Caco-2 (cell line): ENCODE measurements at regions of chr2 and their contacts with region 1.

Region 1: GRCh38 chr2:157302492-157303099 is 23.0 kb downstream of the ERMN start:
- DNase-seq: peak in 1 of 2 experiments; percentile 72
- H3K4me3 ChIP-seq: no peak overlapping the region
- H3K4me3 Mint-ChIP-seq: no peak overlapping the region
- H3K27ac Mint-ChIP-seq: no peak overlapping the region
- H3K4me1 ChIP-seq: peaks cover 36% of the 10 kb centered on the region
- H3K4me1 Mint-ChIP-seq: peaks cover 34% of the 10 kb centered on the region
- H3K27me3 ChIP-seq: no peaks in the 10 kb centered on the region
- H3K27me3 Mint-ChIP-seq: no peaks in the 10 kb centered on the region
- CTCF ChIP-seq: peak; percentile 69 to 77

Region 2: GRCh38 chr2:157061799-157062198 is 240.8 kb before region 1 on chr2:
- CTCF ChIA-PET with region 1: no interaction called
- POLR2A ChIA-PET with region 1: no interaction called
- intact Hi-C with region 1: no loop called
- DNase-seq: no peak
- H3K4me3 ChIP-seq: no peak overlapping the region
- H3K4me3 Mint-ChIP-seq: no peak overlapping the region
- H3K27ac Mint-ChIP-seq: no peak overlapping the region
- H3K4me1 ChIP-seq: no peaks in the 10 kb centered on the region
- H3K4me1 Mint-ChIP-seq: no peaks in the 10 kb centered on the region
- H3K27me3 ChIP-seq: no peaks in the 10 kb centered on the region
- H3K27me3 Mint-ChIP-seq: no peaks in the 10 kb centered on the region
- CTCF ChIP-seq: no peak

Region 3: GRCh38 chr2:157261199-157261783 is 41.3 kb before region 1 on chr2:
- CTCF ChIA-PET with region 1: interaction called, 5 read pairs
- POLR2A ChIA-PET with region 1: interaction called, 10 read pairs
- intact Hi-C with region 1: no loop called
- DNase-seq: peak; percentile 72 to 87
- H3K4me3 ChIP-seq: peak overlapping the region; percentile 19
- H3K4me3 Mint-ChIP-seq: peak overlapping the region; percentile 68
- H3K27ac Mint-ChIP-seq: peak overlapping the region; percentile 83
- H3K4me1 ChIP-seq: peaks cover 50% of the 10 kb centered on the region
- H3K4me1 Mint-ChIP-seq: peaks cover 50% of the 10 kb centered on the region
- H3K27me3 ChIP-seq: no peaks in the 10 kb centered on the region
- H3K27me3 Mint-ChIP-seq: no peaks in the 10 kb centered on the region
- CTCF ChIP-seq: no peak

Region 4: GRCh38 chr2:157336137-157337010 is 33.8 kb after region 1 on chr2:
- CTCF ChIA-PET with region 1: interaction called, 42 read pairs
- POLR2A ChIA-PET with region 1: no interaction called
- intact Hi-C with region 1: loop called (anchors 1 kb)
- DNase-seq: peak in 1 of 2 experiments; percentile 59
- H3K4me3 ChIP-seq: no peak overlapping the region
- H3K4me3 Mint-ChIP-seq: no peak overlapping the region
- H3K27ac Mint-ChIP-seq: no peak overlapping the region
- H3K4me1 ChIP-seq: no peaks in the 10 kb centered on the region
- H3K4me1 Mint-ChIP-seq: no peaks in the 10 kb centered on the region
- H3K27me3 ChIP-seq: no peaks in the 10 kb centered on the region
- H3K27me3 Mint-ChIP-seq: no peaks in the 10 kb centered on the region
- CTCF ChIP-seq: peak; percentile 67 to 68

Region 5: GRCh38 chr2:157470321-157470720 is 167.7 kb after region 1 on chr2:
- CTCF ChIA-PET with region 1: no interaction called
- POLR2A ChIA-PET with region 1: no interaction called
- intact Hi-C with region 1: no loop called
- DNase-seq: no peak
- H3K4me3 ChIP-seq: no peak overlapping the region
- H3K4me3 Mint-ChIP-seq: no peak overlapping the region
- H3K27ac Mint-ChIP-seq: no peak overlapping the region
- H3K4me1 ChIP-seq: no peaks in the 10 kb centered on the region
- H3K4me1 Mint-ChIP-seq: no peaks in the 10 kb centered on the region
- H3K27me3 ChIP-seq: no peaks in the 10 kb centered on the region
- H3K27me3 Mint-ChIP-seq: no peaks in the 10 kb centered on the region
- CTCF ChIP-seq: no peak

Region 6: GRCh38 chr2:157592948-157593347 is 290.4 kb after region 1 on chr2:
- CTCF ChIA-PET with region 1: no interaction called
- POLR2A ChIA-PET with region 1: no interaction called
- intact Hi-C with region 1: loop called (anchors 1 kb)
- DNase-seq: no peak
- H3K4me3 ChIP-seq: no peak overlapping the region
- H3K4me3 Mint-ChIP-seq: no peak overlapping the region
- H3K27ac Mint-ChIP-seq: no peak overlapping the region
- H3K4me1 ChIP-seq: no peaks in the 10 kb centered on the region
- H3K4me1 Mint-ChIP-seq: no peaks in the 10 kb centered on the region
- H3K27me3 ChIP-seq: no peaks in the 10 kb centered on the region; the same call in 1 of the 2 replicates
- H3K27me3 Mint-ChIP-seq: peaks cover 16% of the 10 kb centered on the region
- CTCF ChIP-seq: peak; percentile 16 to 20

Region 7: DNA sequence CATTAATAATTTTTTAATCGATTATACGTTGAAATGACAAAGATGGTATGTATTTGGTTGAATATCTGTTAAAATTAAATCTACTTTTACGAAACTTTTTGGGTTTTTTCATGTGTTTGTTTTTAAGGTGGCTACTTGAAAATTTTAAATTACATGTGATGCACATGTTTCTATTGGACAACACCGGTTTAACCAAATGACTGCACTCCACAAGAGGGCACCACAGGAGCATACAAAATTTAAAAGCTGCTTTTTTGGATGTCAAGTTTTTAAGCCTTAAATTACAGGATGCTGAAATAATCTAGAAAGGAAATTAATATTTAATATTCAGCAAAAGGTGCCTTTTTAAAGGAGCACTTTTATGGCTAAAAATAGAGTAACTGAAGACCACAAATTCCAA is 474.8 kb after region 1 on chr2:
- CTCF ChIA-PET with region 1: no interaction called
- POLR2A ChIA-PET with region 1: no interaction called
- intact Hi-C with region 1: loop called (anchors 10 kb)
- DNase-seq: peak in 1 of 2 experiments; percentile 49
- H3K4me3 ChIP-seq: no peak overlapping the region
- H3K4me3 Mint-ChIP-seq: no peak overlapping the region
- H3K27ac Mint-ChIP-seq: no peak overlapping the region
- H3K4me1 ChIP-seq: no peaks in the 10 kb centered on the region; the same call in 1 of the 2 replicates
- H3K4me1 Mint-ChIP-seq: no peaks in the 10 kb centered on the region
- H3K27me3 ChIP-seq: no peaks in the 10 kb centered on the region
- H3K27me3 Mint-ChIP-seq: no peaks in the 10 kb centered on the region
- CTCF ChIP-seq: peak; percentile 68